Activated CD8-positive, alpha-beta T cell treated with anti-CD3 and anti-CD28 coated beads, Interleukin-2, amount 10 ng/mL, durations not matched to agents 7 days and 5 days (primary cell): ENCODE measurements at regions of chr10 and their contacts with region 1.

Region 1: GRCh38 chr10:30783939-30784500 is 154.5 kb upstream of the LYZL2 start:
- DNase-seq: peak; percentile 89
- ATAC-seq: peak; percentile 81
- H3K4me3 Mint-ChIP-seq: peak overlapping the region; percentile 70
- H3K27ac Mint-ChIP-seq: peak overlapping the region; percentile 64
- H3K4me1 Mint-ChIP-seq: peaks cover 32% of the 10 kb centered on the region
- H3K27me3 Mint-ChIP-seq: peaks cover 11% of the 10 kb centered on the region

Region 2: GRCh38 chr10:30553018-30553624 is 230.9 kb before region 1 on chr10:
- CTCF ChIA-PET with region 1: no interaction called
- POLR2A ChIA-PET with region 1: no interaction called
- DNase-seq: no peak
- ATAC-seq: no peak
- H3K4me3 Mint-ChIP-seq: no peak overlapping the region
- H3K27ac Mint-ChIP-seq: no peak overlapping the region
- H3K4me1 Mint-ChIP-seq: peaks cover 19% of the 10 kb centered on the region
- H3K27me3 Mint-ChIP-seq: peaks cover 5% of the 10 kb centered on the region

Region 3: DNA sequence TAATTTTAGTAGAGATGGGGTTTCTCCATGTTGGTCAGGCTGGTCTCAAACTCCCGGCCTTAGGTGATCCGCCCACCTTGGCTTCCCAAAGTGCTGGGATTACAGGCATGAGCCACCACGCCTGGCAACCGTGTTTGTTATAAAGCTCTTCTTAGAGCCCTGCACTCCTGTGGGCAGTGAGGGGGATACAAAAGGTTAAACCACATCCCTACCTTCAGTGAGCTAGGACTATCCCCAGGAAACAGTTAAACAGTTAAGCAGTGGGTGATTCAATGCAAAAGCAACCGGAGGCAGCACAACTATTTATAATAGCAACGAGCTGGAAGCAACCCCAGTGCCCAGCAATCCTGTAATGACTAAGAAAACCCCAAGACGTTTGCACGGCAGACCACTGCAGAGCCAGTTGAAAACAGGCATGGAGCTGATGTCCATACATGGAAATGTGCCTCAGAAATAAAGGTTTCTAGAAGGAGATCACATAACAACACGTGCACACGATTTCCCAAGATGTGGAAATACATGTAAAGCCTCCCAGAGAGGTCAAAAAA is 47.3 kb before region 1 on chr10:
- CTCF ChIA-PET with region 1: interaction called, 38 read pairs
- POLR2A ChIA-PET with region 1: interaction called, 6 read pairs
- DNase-seq: peak; percentile 64
- ATAC-seq: peak; percentile 87
- H3K4me3 Mint-ChIP-seq: no peak overlapping the region
- H3K27ac Mint-ChIP-seq: peak overlapping the region; percentile 17
- H3K4me1 Mint-ChIP-seq: peaks cover 25% of the 10 kb centered on the region
- H3K27me3 Mint-ChIP-seq: no peaks in the 10 kb centered on the region

Region 4: DNA sequence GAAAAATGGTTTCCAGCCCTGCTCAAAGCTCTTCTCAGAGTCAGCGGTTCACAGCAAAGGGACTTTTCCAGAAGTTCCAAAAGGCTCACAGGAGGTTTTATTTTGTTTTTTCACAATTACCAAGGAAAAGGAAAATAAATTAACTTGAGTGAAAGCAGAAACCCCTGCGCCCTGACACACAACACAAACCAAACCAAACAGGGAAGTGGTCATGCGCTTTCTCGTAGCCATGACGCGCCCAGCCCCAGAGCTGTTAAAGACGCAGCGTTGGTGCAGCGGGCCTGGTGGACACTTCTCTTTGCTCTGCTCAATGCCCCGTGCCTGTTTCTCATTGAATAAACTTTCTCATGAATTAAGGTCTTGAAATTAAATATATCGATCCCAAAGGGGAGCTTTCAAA is 20.1 kb before region 1 on chr10:
- CTCF ChIA-PET with region 1: interaction called, 33 read pairs
- POLR2A ChIA-PET with region 1: interaction called, 4 read pairs
- DNase-seq: peak; percentile 48
- ATAC-seq: peak; percentile 51
- H3K4me3 Mint-ChIP-seq: peak overlapping the region; percentile 34
- H3K27ac Mint-ChIP-seq: peak overlapping the region; percentile 76
- H3K4me1 Mint-ChIP-seq: peaks cover 29% of the 10 kb centered on the region
- H3K27me3 Mint-ChIP-seq: peaks cover 3% of the 10 kb centered on the region

Region 5: DNA sequence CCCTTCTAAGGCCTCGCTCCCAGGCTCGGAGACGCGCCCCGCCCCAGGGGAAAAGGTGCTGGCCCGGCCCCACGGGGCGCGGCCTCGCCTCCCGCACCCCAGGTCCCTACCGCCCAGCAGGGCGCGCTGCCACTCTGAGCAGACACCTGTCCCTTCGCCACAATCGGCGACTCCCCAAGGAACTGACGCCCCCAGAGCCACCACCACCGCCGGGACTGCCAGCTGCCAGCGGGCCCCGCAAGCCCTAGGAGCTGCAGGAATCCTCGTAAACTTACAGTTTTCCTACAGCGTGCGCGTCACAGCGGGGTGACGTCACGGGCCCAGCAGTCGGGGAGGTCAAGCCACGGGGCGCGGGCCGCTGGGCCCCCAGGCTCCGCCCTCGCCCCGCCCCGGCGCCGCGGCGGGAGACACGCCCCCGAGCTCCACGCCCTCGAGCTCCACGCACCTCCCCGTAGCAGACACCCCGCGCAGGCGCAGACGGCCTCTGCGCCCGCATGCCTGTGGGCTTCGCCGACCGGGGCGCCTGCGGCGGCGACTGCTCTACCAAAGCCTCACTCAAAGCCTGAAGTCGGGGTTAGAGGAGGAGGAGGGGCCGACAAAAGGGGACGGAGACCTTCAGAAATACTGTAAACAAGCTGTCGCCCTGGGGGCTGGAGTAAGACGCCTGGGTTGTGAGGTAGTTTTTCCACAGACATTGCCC is 247.7 kb after region 1 on chr10 and contains the start of gene ZNF438:
- CTCF ChIA-PET with region 1: interaction called, 21 read pairs
- POLR2A ChIA-PET with region 1: interaction called, 9 read pairs
- DNase-seq: peak; percentile 93
- ATAC-seq: peak; percentile 85
- H3K4me3 Mint-ChIP-seq: peak within 1 kb of the TSS; percentile 84
- H3K27ac Mint-ChIP-seq: peak within 1 kb of the TSS; percentile 97
- H3K4me1 Mint-ChIP-seq: peaks cover 10% of the 10 kb centered on the region
- H3K27me3 Mint-ChIP-seq: no peaks in the 10 kb centered on the region
- total RNA-seq, gene ZNF438: 2.3 to 2.6 TPM

Region 6: DNA sequence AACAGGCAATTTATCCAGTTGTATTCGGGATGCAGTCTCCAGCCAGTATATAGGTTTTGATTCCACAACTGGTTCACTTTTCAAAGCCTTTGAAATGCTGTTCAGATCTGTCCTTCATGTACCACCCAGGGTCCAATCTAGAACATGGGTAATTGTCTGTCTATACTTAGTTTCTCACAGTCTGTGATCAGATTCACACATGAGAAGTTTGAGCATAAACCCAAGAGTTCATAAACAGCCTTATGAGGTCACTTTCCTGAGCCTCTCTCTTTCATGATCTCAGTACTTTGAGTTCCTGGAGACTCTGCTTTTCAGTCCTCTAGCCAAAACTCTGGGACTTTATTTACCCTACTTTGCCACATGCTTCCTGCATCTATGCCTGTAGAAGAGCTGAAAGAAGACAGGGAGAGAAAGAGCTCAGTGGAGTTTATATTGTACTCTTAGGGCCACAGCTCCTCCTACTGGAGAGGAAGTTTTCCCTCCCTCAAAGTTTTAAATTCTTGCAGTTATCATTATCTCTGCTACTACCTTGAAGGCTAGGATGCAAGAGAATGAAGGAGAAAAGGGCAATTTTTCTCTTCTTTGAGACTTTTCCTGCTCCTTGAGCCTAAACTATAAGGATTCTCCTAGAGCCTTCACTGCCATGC is 707.0 kb after region 1 on chr10:
- CTCF ChIA-PET with region 1: interaction called, 19 read pairs
- POLR2A ChIA-PET with region 1: no interaction called
- DNase-seq: peak; percentile 35
- ATAC-seq: no peak
- H3K4me3 Mint-ChIP-seq: no peak overlapping the region
- H3K27ac Mint-ChIP-seq: no peak overlapping the region
- H3K4me1 Mint-ChIP-seq: no peaks in the 10 kb centered on the region
- H3K27me3 Mint-ChIP-seq: no peaks in the 10 kb centered on the region